ENCODE measurements at regions of chr7 and their contacts with region 1.

Region 1: DNA sequence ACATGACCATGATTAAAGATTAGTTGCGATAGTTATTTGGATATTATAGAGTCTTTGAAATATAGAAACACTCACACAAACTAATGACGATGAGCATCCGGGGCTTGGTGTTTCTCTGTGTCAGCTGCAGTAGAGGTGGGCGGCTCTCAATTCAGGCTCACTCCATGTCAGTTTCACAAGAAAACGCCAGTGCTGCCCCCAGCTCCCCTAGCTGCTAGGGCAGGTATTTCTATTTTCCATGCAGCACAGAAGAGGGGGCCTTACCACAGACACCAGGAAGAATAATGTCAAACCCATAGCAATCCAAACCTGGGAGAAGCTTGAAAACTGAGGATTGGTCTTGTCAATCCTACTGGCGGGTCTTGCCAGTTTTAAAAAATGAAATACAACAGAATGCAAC is 197.1 kb downstream of the PHTF2 start:
- DNase-seq: no peak
- H3K4me3 ChIP-seq: no peak overlapping the region
- H3K27ac ChIP-seq: no peak overlapping the region
- H3K4me1 ChIP-seq: no peaks in the 10 kb centered on the region
- H3K27me3 ChIP-seq: no peaks in the 10 kb centered on the region
- CTCF ChIP-seq: no peak
- EP300 ChIP-seq: no peak
- POLR2A ChIP-seq: no peak

Region 2: DNA sequence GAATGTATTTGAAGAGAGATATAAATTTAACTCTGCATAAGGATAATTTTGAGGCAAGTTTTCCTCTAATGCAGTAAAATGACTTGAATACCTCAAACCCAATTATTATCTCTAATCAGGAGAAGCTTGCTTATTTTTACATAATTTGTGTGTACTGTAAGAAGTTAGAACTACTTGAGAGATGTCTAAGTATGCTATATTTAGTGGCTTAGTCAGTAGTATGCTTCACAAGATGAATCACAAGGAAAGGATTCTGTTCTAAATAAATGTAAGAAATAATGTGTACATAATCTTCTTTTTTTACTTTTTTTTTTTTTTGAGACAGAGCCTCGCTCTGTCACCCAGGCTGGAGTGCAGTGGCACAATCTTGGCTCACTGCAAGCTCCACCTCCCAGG is 183.4 kb before region 1 on chr7:
- in situ Hi-C with region 1: no loop called
- intact Hi-C with region 1: no loop called
- DNase-seq: no peak
- H3K4me3 ChIP-seq: no peak overlapping the region
- H3K27ac ChIP-seq: no peak overlapping the region
- H3K4me1 ChIP-seq: peaks cover 0 to 2% (median 0%) of the 10 kb centered on the region in 4 donors
- H3K27me3 ChIP-seq: no peaks in the 10 kb centered on the region
- CTCF ChIP-seq: no peak
- EP300 ChIP-seq: no peak
- POLR2A ChIP-seq: no peak

Region 3: DNA sequence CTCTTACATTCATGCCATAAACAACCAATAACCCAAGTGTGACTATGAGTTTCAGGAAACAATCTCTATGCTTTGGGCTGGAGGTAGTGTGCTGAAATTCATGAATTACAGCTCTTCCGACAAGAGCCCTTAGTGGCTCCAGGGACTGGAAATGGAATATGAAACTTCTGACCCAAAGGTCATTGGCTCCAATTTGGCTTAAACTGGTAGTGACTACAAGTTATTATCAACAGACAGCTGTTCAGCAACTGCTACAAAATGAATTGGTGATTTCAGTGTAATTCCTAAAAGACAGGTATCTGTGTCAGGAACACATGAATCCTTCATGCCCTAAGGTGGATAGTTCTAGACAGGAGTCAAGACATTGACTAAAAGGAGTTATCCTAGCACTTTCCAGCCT is 548.3 kb after region 1 on chr7:
- in situ Hi-C with region 1: no loop called
- intact Hi-C with region 1: loop called (anchors 5 kb)
- DNase-seq: no peak
- H3K4me3 ChIP-seq: no peak overlapping the region
- H3K27ac ChIP-seq: no peak overlapping the region
- H3K4me1 ChIP-seq: no peaks in the 10 kb centered on the region
- H3K27me3 ChIP-seq: no peaks in the 10 kb centered on the region
- CTCF ChIP-seq: no peak
- EP300 ChIP-seq: no peak
- POLR2A ChIP-seq: no peak